ENCODE measurements at regions of chr2 and their contacts with region 1.

Region 1: DNA sequence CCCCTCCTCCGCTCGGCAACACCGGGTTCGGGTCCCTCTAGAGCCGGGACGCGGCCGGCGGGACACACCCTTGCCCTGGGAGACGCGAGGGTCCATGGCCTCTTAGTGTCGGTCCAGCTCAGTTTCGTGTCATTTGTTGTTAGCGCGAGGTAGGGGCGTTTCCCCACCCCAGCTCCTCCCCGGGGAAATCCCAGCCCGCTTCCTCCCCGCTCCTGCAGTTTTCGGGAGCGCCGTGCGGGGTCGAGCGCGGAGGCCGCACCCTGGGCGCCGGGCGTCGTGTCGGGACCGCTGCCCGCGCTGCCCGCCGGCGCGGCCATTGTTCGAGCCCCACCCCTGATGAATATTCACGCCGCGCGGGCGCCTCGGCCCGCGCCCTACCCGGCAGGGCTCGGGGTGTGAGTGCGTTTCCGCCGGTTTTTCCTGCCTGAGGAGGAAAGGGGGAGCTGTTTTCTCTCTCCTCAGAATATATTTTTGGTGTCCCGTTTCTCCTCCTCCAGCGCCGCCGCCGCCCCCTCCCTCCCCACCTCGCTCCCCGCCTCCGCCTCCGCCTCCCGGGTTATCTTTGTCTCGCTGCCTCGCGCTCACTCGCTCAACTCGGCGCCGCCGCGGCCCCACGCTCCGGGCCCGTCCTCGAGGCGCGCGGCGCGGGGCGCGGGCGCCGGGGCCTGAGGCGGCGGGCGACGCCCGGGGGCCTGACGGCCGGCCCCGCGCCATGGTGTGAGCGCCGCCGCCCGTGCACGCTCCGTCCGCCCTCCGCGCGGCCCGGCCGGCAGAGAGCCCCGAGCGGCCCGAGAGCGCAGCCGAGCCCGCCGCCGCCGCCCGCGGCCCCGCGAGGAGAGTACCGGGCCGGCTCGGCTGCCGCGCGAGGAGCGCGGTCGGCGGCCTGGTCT is at the start of gene MAP4K4:
- DNase-seq: peak; percentile 91 to 95
- ATAC-seq: peak; percentile 89
- H3K4me3 ChIP-seq: peak within 1 kb of the TSS; percentile 96 to 98
- H3K27ac ChIP-seq: peak within 1 kb of the TSS; percentile 15 to 49
- H3K4me1 ChIP-seq: no peaks in the 10 kb centered on the region
- H3K27me3 ChIP-seq: no peaks in the 10 kb centered on the region
- total RNA-seq, gene MAP4K4: 85.4 to 112 TPM

Region 2: DNA sequence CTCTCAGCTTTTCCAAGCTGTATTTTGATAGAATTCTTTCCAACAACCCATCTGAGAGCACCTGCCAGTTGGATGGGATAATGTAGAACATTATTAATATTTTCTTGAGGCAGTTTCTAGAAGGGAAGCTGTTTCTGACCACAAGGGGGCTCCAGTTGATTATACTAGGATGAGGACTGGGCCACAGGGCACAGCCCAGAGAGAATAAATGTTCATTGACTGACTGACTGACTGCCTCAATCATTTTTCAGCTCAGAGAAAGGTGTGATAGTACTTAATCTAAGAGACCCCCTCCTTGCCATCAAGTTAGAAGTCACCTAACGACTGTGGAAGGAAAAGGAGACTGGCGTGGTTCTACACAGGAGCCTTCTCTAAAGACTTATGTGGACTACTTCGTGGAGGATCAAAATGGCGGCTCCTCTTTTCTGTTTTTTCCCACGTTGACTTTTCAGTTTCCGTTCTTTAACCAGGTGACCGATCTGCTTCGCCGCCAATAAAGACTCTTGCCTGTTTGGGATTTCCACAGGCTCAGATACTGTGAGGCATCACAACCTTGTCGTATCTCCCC is 278.2 kb before region 1 on chr2:
- intact Hi-C with region 1: loop called in 1 of 2 experiments (anchors 10 kb)
- DNase-seq: no peak
- ATAC-seq: peak; percentile 83
- H3K4me3 ChIP-seq: no peak overlapping the region
- H3K27ac ChIP-seq: no peak overlapping the region
- H3K4me1 ChIP-seq: no peaks in the 10 kb centered on the region
- H3K27me3 ChIP-seq: no peaks in the 10 kb centered on the region

Region 3: GRCh38 chr2:101587251-101587650 is 110.1 kb before region 1 on chr2:
- intact Hi-C with region 1: no loop called
- DNase-seq: no peak
- ATAC-seq: no peak
- H3K4me3 ChIP-seq: no peak overlapping the region
- H3K27ac ChIP-seq: no peak overlapping the region
- H3K4me1 ChIP-seq: no peaks in the 10 kb centered on the region
- H3K27me3 ChIP-seq: no peaks in the 10 kb centered on the region

Region 4: GRCh38 chr2:101655702-101656422 is 41.5 kb before region 1 on chr2:
- intact Hi-C with region 1: loop called in 1 of 2 experiments (anchors 5 kb)
- DNase-seq: peak in 1 of 2 donors; percentile 42
- ATAC-seq: no peak
- H3K4me3 ChIP-seq: no peak overlapping the region
- H3K27ac ChIP-seq: peak overlapping the region in 1 of 2 donors; percentile 16
- H3K4me1 ChIP-seq: peaks cover 0 to 2% of the 10 kb centered on the region in 2 donors
- H3K27me3 ChIP-seq: no peaks in the 10 kb centered on the region

Region 5: GRCh38 chr2:101736861-101737291 is 39.5 kb after region 1 on chr2:
- intact Hi-C with region 1: loop called (anchors 5 kb)
- DNase-seq: no peak
- ATAC-seq: peak; percentile 55
- H3K4me3 ChIP-seq: no peak overlapping the region
- H3K27ac ChIP-seq: no peak overlapping the region
- H3K4me1 ChIP-seq: peaks cover 10 to 19% of the 10 kb centered on the region in 2 donors
- H3K27me3 ChIP-seq: no peaks in the 10 kb centered on the region

Region 6: GRCh38 chr2:101766871-101767739 is 69.7 kb after region 1 on chr2:
- intact Hi-C with region 1: loop called in 1 of 2 experiments (anchors 10 kb)
- DNase-seq: no peak
- ATAC-seq: no peak
- H3K4me3 ChIP-seq: no peak overlapping the region
- H3K27ac ChIP-seq: peak overlapping the region in 1 of 2 donors; percentile 48
- H3K4me1 ChIP-seq: peaks cover 21 to 25% of the 10 kb centered on the region in 2 donors
- H3K27me3 ChIP-seq: no peaks in the 10 kb centered on the region

Region 7: GRCh38 chr2:101831351-101831865 is 134.0 kb after region 1 on chr2:
- intact Hi-C with region 1: loop called (anchors 2 to 5 kb)
- DNase-seq: peak; percentile 80 to 87
- ATAC-seq: peak; percentile 94
- H3K4me3 ChIP-seq: no peak overlapping the region
- H3K27ac ChIP-seq: peak overlapping the region in 1 of 2 donors; percentile 59
- H3K4me1 ChIP-seq: peaks cover 3 to 7% of the 10 kb centered on the region in 2 donors
- H3K27me3 ChIP-seq: no peaks in the 10 kb centered on the region

Measured in aorta (tissue), 5 donors.